ENCODE measurements at regions of chr1 and their contacts with region 1.

Region 1: DNA sequence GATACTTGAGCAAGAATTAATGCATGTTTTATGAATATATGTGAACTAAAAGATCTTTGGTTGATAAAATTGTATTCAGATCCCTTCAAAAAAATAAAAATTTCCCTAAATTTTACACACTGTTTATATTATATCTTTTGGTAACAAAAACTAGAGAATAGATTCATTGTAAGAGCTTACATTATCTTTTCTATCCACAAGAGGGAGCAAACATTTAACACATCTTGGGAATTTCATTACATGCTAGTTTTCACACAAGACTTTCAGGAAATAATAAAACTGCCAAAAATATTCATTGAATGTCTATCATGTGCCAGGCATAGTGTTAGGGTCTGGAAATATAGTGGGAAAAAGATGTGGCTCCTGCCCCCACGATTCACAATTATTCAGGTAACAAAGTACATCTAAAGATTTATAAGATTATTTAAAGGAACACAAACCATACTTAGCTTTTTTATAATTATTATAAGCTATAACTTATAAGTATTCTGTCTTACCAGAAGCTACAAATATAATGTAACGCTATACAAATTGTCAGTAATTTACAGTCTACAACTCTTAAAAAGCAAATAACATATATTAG is 30.6 kb downstream of the FAF1 start:
- DNase-seq: peak; percentile 47
- H3K4me3 ChIP-seq: no peak overlapping the region
- H3K27ac ChIP-seq: no peak overlapping the region
- H3K4me1 ChIP-seq: peaks cover 6% of the 10 kb centered on the region
- CTCF ChIP-seq: peak; percentile 90

Region 2: GRCh38 chr1:50873458-50874187 is 55.8 kb before region 1 on chr1:
- CTCF ChIA-PET with region 1: no interaction called
- POLR2A ChIA-PET with region 1: interaction called, 3 read pairs
- intact Hi-C with region 1: loop called (anchors 2 kb)
- DNase-seq: peak; percentile 83
- H3K4me3 ChIP-seq: peak overlapping the region; percentile 48
- H3K27ac ChIP-seq: peak overlapping the region; percentile 8
- H3K4me1 ChIP-seq: peaks cover 14% of the 10 kb centered on the region
- CTCF ChIP-seq: peak; percentile 100

Region 3: DNA sequence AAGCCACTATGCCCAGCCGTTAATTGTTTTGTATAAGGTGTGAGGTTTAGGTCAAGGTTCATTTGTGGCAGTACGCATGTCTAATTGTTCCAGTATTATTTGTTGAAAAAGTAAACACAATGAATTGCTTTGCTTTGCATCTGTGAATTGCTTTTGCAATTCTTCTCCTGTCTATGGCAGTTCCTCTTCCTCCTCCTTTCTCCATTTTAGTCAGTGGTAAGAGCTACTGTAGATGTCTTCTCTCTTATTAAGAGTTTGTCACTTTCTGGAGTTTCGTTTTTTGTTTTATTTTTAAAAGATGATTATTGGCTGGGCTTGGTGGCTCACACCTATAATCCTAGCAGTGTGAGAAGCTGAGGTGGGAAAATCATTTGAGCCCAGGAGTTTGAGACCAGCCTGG is 201.7 kb after region 1 on chr1:
- CTCF ChIA-PET with region 1: no interaction called
- POLR2A ChIA-PET with region 1: no interaction called
- intact Hi-C with region 1: no loop called
- DNase-seq: no peak
- H3K4me3 ChIP-seq: no peak overlapping the region
- H3K27ac ChIP-seq: no peak overlapping the region
- H3K4me1 ChIP-seq: no peaks in the 10 kb centered on the region
- CTCF ChIP-seq: no peak